ENCODE measurements at regions of chr3 and their contacts with region 1.

Region 1: GRCh38 chr3:168165390-168166269 is 69.9 kb upstream of the GOLIM4 start:
- DNase-seq: peak; percentile 73
- H3K4me3 Mint-ChIP-seq: no peak overlapping the region
- H3K27ac Mint-ChIP-seq: no peak overlapping the region
- H3K4me1 Mint-ChIP-seq: no peaks in the 10 kb centered on the region
- H3K27me3 Mint-ChIP-seq: no peaks in the 10 kb centered on the region
- CTCF ChIP-seq: peak; percentile 86

Region 2: GRCh38 chr3:167929968-167930367 is 235.7 kb before region 1 on chr3:
- CTCF ChIA-PET with region 1: no interaction called
- intact Hi-C with region 1: loop called (anchors 5 kb)
- DNase-seq: no peak
- H3K4me3 Mint-ChIP-seq: no peak overlapping the region
- H3K27ac Mint-ChIP-seq: no peak overlapping the region
- H3K4me1 Mint-ChIP-seq: no peaks in the 10 kb centered on the region
- H3K27me3 Mint-ChIP-seq: no peaks in the 10 kb centered on the region
- CTCF ChIP-seq: no peak

Region 3: GRCh38 chr3:168047190-168047795 is 118.3 kb before region 1 on chr3:
- CTCF ChIA-PET with region 1: interaction called, 18 read pairs
- intact Hi-C with region 1: loop called (anchors 1 kb)
- DNase-seq: peak; percentile 36
- H3K4me3 Mint-ChIP-seq: no peak overlapping the region
- H3K27ac Mint-ChIP-seq: no peak overlapping the region
- H3K4me1 Mint-ChIP-seq: no peaks in the 10 kb centered on the region
- H3K27me3 Mint-ChIP-seq: no peaks in the 10 kb centered on the region
- CTCF ChIP-seq: peak; percentile 81